ENCODE measurements at regions of chr12 and their contacts with region 1.

Region 1: DNA sequence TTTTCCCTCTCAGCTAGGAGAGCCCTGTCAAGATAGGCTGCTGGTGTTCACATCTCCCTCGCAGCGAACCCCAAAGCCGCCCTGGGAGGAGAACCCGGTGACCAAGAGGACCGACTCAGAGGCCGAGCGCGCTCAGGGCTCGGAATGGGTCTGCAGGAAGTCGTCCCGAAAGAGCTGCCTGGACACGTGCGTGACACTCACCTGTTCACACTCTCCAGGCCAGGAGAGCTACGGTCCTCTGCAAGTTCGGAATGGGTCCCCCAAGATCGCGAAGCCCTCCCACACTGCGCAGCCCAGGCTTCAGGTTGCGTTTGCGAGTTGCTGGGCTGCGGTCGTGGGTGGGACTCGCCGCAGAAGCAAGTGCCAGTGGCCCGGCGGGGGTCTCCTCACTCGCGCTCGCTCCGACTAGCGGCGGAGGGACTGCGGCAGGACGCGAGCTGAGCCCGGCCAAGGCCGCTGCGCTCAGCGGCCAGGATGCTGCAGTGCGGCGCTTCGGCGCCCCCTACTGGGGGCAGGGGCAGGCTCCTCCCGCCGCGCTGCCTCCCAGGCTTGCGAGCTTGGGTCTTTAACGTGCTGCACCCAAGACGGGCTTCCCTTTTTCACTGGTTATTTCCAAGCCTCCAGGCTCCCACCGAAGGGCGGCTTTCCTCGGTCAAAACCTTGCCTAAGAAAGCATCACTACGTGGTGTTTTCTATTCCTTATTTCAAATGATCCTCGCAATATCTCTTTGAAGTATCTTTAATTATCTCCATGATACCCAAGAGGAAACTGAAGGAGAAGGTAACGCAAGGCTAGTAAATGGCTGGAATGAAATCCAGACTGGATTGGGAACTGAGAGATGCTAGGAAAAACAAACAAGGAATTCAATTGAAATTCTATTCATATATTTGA is at the start of gene RERG:
- DNase-seq: peak; percentile 71 to 86
- ATAC-seq: peak; percentile 97 to 100 (median 98)
- H3K4me3 ChIP-seq: peak within 1 kb of the TSS; percentile 35 to 65 (median 61)
- H3K27ac ChIP-seq: peak within 1 kb of the TSS; percentile 51 to 82 (median 78)
- H3K4me1 ChIP-seq: peaks cover 0 to 14% (median 4%) of the 10 kb centered on the region in 9 donors
- H3K27me3 ChIP-seq: peaks cover 0 to 62% (median 0%) of the 10 kb centered on the region in 7 donors
- CTCF ChIP-seq: peak; percentile 94 to 99 (median 98)
- total RNA-seq, gene RERG: 2.1 to 4.8 (median 2.7) TPM

Region 2: GRCh38 chr12:14723763-14724162 is 497.5 kb before region 1 on chr12:
- intact Hi-C with region 1: loop called in 1 of 10 experiments (anchors 10 kb)
- DNase-seq: peak; percentile 26 to 58
- ATAC-seq: peak; percentile 67 to 98 (median 84)
- H3K4me3 ChIP-seq: no peak overlapping the region
- H3K27ac ChIP-seq: no peak overlapping the region
- H3K4me1 ChIP-seq: no peaks in the 10 kb centered on the region
- H3K27me3 ChIP-seq: no peaks in the 10 kb centered on the region
- CTCF ChIP-seq: peak; percentile 41 to 76 (median 65)

Region 3: DNA sequence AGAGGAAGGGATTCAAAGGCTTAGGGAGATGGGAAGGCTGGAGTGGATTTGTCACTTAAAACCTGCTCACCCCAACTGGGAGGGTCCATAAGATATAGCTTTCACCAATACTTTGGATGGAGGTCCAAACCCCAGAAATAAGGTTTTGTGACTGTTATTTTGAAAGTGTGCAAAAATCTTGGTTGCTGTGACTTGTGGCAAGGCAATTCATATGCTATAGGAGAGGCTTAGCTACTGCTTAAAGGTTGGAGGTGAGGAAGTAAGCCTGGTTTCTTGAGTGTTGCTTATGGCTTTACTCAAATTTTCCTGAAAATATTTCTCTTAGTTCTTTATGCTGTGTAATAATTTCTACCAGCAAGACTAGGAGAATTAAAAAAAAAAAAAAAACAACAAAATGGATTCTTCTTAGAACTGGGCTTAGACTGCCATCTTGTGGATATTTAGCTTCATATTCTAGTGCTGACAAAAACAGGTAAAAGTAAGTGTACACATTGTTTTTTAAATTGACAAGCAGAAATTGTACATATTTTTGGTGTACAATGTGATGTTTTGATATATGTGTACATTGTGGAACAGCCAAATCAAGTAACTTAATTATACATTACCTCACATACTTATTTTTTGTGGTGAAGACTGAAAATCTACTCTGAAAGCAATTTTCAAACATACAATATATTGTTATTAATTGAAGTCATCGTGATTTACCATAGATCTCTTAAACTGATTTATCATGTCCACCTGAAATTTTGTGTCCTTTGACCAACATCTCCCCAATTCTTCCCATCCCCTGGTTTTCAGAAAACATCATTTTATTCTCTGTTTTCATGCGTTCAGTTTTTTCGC is 225.4 kb before region 1 on chr12:
- intact Hi-C with region 1: loop called in 6 of 10 experiments (anchors 5 kb)
- DNase-seq: no peak
- ATAC-seq: peak in 5 of 8 donors; percentile 16 to 67 (median 60)
- H3K4me3 ChIP-seq: no peak overlapping the region
- H3K27ac ChIP-seq: peak overlapping the region in 1 of 10 donors; percentile 23
- H3K4me1 ChIP-seq: peaks cover 0 to 25% (median 4%) of the 10 kb centered on the region in 9 donors
- H3K27me3 ChIP-seq: no peaks in the 10 kb centered on the region
- CTCF ChIP-seq: peak; percentile 64 to 85 (median 74)

Region 4: DNA sequence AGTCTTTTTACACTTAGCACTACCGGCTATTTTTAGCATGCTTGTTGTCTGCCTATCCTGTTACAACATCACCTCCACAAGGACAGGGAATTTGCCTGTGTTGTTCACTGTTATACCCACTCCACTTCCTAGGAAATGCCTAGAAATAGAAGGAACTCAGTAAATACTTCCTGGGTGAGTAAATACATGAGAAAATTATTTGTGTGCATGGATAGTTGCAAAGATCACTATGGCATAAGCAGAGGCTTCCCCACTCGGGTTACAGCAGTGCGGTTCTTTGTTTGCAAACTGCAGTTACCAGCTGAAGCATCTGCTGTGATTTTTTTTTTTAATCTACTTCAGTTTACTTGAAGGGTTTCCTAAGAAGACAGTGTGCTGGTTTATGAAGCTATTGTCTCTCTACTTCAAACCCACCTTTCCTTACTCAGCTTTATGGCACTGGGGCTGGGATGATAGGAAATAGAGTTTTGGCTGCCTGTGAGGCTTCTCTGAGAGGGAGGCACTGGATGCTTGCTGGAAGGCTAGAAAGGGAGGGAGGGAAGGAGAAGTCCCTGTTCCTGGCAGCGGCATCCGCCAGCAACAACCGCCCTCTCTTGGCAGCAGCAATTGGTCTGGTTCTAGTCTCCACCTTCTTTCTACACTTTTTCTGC is 219.4 kb before region 1 on chr12:
- intact Hi-C with region 1: loop called in 6 of 10 experiments (anchors 5 kb)
- DNase-seq: peak; percentile 23 to 40
- ATAC-seq: peak in 7 of 8 donors; percentile 66 to 93 (median 73)
- H3K4me3 ChIP-seq: no peak overlapping the region
- H3K27ac ChIP-seq: no peak overlapping the region
- H3K4me1 ChIP-seq: peaks cover 3 to 14% (median 11%) of the 10 kb centered on the region in 9 donors
- H3K27me3 ChIP-seq: peaks cover 0 to 11% (median 0%) of the 10 kb centered on the region in 7 donors
- CTCF ChIP-seq: no peak

Region 5: GRCh38 chr12:15011162-15011561 is 210.1 kb before region 1 on chr12:
- intact Hi-C with region 1: loop called in 1 of 10 experiments (anchors 10 kb)
- DNase-seq: no peak
- ATAC-seq: no peak
- H3K4me3 ChIP-seq: no peak overlapping the region
- H3K27ac ChIP-seq: no peak overlapping the region
- H3K4me1 ChIP-seq: no peaks in the 10 kb centered on the region
- H3K27me3 ChIP-seq: peaks cover 0 to 14% (median 9%) of the 10 kb centered on the region in 7 donors
- CTCF ChIP-seq: peak in 1 of 9 donors; percentile 8

Region 6: DNA sequence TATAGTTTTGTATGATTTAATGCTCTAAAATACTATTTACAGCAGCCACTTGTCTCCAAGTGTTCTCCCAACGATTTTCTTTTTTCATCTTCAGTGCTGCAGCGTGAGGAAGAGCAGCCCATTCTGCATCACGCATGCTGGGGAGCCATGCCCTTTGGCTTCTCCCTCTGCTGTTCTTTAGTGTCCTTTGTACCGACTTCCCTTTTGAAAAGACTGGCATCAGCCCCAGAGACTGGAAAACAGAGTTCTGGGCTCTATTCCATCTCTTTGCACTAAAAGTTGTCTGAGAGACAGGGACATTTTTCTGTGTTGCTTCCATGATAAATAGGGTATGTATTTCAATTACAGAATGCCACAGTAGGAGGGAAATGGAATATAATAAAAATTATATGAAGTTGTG is 105.2 kb before region 1 on chr12:
- intact Hi-C with region 1: no loop called
- DNase-seq: no peak
- ATAC-seq: peak in 1 of 8 donors; percentile 57
- H3K4me3 ChIP-seq: no peak overlapping the region
- H3K27ac ChIP-seq: no peak overlapping the region
- H3K4me1 ChIP-seq: peaks cover 0 to 6% (median 0%) of the 10 kb centered on the region in 9 donors
- H3K27me3 ChIP-seq: no peaks in the 10 kb centered on the region
- CTCF ChIP-seq: no peak

Region 7: GRCh38 chr12:15151161-15152120 is 69.8 kb before region 1 on chr12:
- intact Hi-C with region 1: loop called in 9 of 10 experiments (anchors 1 to 5 kb)
- DNase-seq: peak in 1 of 2 donors; percentile 32
- ATAC-seq: peak in 7 of 8 donors; percentile 44 to 88 (median 71)
- H3K4me3 ChIP-seq: no peak overlapping the region
- H3K27ac ChIP-seq: peak overlapping the region in 4 of 10 donors; percentile 32 to 48 (median 42)
- H3K4me1 ChIP-seq: peaks cover 0 to 23% (median 13%) of the 10 kb centered on the region in 9 donors
- H3K27me3 ChIP-seq: peaks cover 0 to 8% (median 0%) of the 10 kb centered on the region in 7 donors
- CTCF ChIP-seq: peak in 8 of 9 donors; percentile 38 to 66 (median 52)